ENCODE measurements at regions of chr10 and their contacts with region 1.

Region 1: GRCh38 chr10:95693668-95694534 is at the start of gene TCTN3:
- DNase-seq: peak; percentile 99
- ATAC-seq: peak; percentile 100
- H3K4me3 ChIP-seq: peak within 1 kb of the TSS; percentile 82
- H3K27ac ChIP-seq: peak within 1 kb of the TSS; percentile 82 to 93
- H3K4me1 ChIP-seq: peaks cover 17% of the 10 kb centered on the region; the same call in 2 of the 3 replicates
- CTCF ChIP-seq: peak; percentile 99
- EP300 ChIP-seq: no peak
- POLR2A ChIP-seq: peak; percentile 88
- RAD21 ChIP-seq: peak; percentile 92 to 95
- polyA plus RNA-seq, gene TCTN3: 55.5 and 63.0 TPM in 2 replicates

Region 2: GRCh38 chr10:95660283-95660682 is 33.6 kb before region 1 on chr10:
- CTCF ChIA-PET with region 1: interaction called, 22 read pairs
- POLR2A ChIA-PET with region 1: interaction called, 4 read pairs
- DNase-seq: no peak
- ATAC-seq: no peak
- H3K4me3 ChIP-seq: no peak overlapping the region
- H3K27ac ChIP-seq: no peak overlapping the region
- H3K4me1 ChIP-seq: peaks cover 10% of the 10 kb centered on the region; the same call in 1 of the 3 replicates
- CTCF ChIP-seq: no peak
- EP300 ChIP-seq: no peak
- POLR2A ChIP-seq: no peak
- RAD21 ChIP-seq: no peak

Region 3: GRCh38 chr10:95675403-95676112 is 18.3 kb before region 1 on chr10:
- CTCF ChIA-PET with region 1: interaction called, 15 read pairs
- POLR2A ChIA-PET with region 1: interaction called, 4 read pairs
- DNase-seq: no peak
- ATAC-seq: no peak
- H3K4me3 ChIP-seq: no peak overlapping the region
- H3K27ac ChIP-seq: no peak overlapping the region
- H3K4me1 ChIP-seq: no peaks in the 10 kb centered on the region
- CTCF ChIP-seq: no peak
- EP300 ChIP-seq: no peak
- POLR2A ChIP-seq: no peak
- RAD21 ChIP-seq: no peak

Region 4: GRCh38 chr10:95706986-95707385 is 13.1 kb after region 1 on chr10:
- CTCF ChIA-PET with region 1: interaction called, 14 read pairs
- POLR2A ChIA-PET with region 1: no interaction called
- DNase-seq: no peak
- ATAC-seq: no peak
- H3K4me3 ChIP-seq: no peak overlapping the region
- H3K27ac ChIP-seq: no peak overlapping the region
- H3K4me1 ChIP-seq: no peaks in the 10 kb centered on the region
- CTCF ChIP-seq: no peak
- EP300 ChIP-seq: no peak
- POLR2A ChIP-seq: no peak
- RAD21 ChIP-seq: no peak

Region 5: DNA sequence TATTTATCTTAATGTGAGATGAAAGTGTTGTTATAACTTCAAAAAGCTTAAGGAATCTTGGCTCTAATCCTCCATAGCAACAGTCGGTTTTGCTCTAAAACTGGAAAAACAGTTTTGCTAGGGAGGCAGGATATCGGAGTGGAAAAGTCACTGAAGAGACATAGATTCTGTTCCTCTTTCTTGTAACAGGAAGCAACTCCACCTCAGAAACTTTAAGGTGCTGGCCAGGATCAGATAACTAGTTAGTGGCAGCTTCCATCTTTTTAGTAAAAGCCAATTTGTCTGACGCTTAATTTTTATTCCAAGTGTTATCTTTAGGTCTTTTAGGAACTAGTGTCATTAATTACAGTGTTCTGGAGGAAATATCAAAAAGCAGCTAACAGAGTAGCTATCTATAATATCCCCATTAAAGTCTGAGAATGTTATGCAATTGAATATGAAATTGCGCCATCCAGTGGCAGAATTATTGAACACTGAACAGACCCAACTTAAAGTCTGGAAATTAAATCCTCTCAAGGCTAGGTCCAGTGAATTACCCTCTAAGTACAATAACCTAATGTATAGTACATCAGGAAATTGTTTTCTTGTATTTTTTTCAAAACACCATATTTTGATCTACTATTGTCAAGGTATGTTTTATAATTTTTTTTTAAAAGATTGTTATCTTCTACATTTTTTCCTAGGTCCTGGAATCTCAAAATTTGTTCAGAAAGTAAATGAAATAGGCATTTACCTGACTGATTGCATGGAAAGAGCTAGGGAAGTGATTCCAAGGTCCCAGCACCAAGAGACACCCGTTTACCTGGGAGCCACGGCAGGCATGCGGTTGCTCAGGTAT is 148.0 kb after region 1 on chr10:
- CTCF ChIA-PET with region 1: interaction called, 79 read pairs
- POLR2A ChIA-PET with region 1: interaction called, 3 read pairs
- DNase-seq: peak; percentile 35 to 56
- ATAC-seq: peak; percentile 65 to 85; a peak in 4 of 6 replicates
- H3K4me3 ChIP-seq: no peak overlapping the region
- H3K27ac ChIP-seq: no peak overlapping the region
- H3K4me1 ChIP-seq: no peaks in the 10 kb centered on the region
- CTCF ChIP-seq: peak; percentile 66
- EP300 ChIP-seq: no peak
- POLR2A ChIP-seq: no peak
- RAD21 ChIP-seq: peak; percentile 66 to 68

Region 6: GRCh38 chr10:95848841-95849240 is 154.9 kb after region 1 on chr10:
- CTCF ChIA-PET with region 1: interaction called, 79 read pairs
- POLR2A ChIA-PET with region 1: interaction called, 3 read pairs
- DNase-seq: no peak
- ATAC-seq: no peak
- H3K4me3 ChIP-seq: no peak overlapping the region
- H3K27ac ChIP-seq: no peak overlapping the region
- H3K4me1 ChIP-seq: no peaks in the 10 kb centered on the region
- CTCF ChIP-seq: no peak
- EP300 ChIP-seq: no peak
- POLR2A ChIP-seq: no peak
- RAD21 ChIP-seq: no peak

Region 7: DNA sequence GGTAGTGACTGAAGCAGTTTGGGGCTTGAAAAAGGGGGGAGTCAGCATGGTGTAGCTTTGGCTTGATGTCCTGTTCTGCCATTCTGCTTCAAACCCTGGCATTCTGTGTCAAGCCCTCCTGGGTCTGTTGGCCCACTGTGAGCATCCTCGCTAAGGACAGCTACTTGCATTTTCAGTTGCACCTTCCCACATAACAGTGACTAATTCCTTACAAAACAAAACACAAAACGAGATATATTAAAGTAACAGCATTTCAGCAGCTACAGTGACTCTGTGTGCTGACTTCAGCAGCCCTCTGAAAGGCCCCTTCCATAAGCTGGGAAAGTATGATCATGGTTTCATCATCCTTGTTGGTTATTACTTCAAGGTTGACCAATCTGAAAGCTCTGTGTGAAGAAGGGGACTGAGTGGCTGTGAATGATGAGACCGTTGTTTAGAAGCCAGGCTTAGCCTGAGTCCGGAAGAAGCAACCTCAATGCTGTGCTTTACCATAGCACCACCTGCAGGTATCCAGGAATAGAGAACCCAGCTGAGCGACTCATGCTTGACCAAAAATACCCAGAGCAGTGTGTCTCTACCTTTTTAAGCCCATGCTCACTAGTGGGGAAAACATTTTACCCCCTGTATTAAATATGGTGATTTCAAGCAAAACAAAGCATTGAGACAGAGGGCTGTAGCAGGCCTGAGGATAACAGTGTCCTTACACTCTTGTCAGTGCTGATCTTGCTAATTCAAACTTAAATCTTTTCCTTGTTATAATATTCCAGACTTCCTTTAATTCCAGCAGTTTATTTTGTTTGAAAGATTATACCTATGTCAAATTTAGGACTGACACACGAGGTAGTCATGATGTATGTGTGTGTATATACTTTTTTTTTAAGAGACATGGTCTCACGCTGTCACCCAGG is 171.3 kb after region 1 on chr10:
- CTCF ChIA-PET with region 1: interaction called, 27 read pairs
- POLR2A ChIA-PET with region 1: interaction called, 5 read pairs
- DNase-seq: peak; percentile 49 to 67
- ATAC-seq: peak; percentile 96 to 99
- H3K4me3 ChIP-seq: no peak overlapping the region
- H3K27ac ChIP-seq: no peak overlapping the region
- H3K4me1 ChIP-seq: no peaks in the 10 kb centered on the region
- CTCF ChIP-seq: peak; percentile 58
- EP300 ChIP-seq: no peak
- POLR2A ChIP-seq: no peak
- RAD21 ChIP-seq: peak; percentile 64 to 77

Measured in A549 (cell line).